Brain microvascular endothelial cell (primary cell): ENCODE measurements at regions of chr1 and their contacts with region 1.

Region 1: DNA sequence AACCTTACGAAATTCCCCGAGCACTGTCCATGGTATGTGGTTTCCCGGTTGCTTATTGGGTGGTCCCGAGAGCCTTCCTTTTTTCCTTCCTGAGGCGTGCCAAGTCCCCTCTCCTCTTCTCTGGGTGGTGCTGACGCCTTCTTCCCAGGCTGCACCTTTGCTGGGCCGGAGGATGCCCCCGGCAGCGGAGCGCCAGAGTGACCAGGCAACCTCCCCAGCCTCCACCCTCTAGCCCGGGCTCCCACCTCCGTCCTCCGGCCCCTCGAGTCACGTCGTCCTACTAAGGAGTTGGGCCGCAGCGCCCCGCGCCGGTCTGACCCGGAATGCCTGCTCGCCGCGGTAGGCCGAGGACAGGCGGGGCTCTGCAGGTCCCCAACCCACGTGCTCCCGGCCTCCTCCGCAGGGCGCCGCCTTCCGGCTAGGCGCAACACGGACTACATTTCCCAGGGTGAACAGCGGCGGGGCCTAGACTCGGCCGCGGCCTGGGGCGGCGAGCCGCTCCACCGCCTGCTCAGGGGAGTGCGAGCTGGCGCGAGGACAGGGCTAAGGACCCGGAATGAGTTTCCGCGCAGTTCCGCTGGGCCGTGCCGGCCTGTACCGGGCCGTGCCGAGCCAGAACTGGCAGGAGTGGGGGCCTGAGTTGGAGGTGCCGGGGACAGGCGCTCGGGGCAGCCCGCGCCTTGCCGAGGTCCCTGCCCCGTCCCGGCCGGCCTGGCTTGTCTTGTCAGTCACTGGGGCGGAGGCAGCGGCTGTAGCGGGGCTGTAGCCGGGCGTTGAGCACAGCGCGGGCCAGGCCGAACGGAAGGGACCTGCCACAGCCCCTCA is at the start of gene IPO13:
- DNase-seq: peak; percentile 87
- H3K4me3 ChIP-seq: peak within 1 kb of the TSS; percentile 90
- H3K27ac ChIP-seq: peak within 1 kb of the TSS; percentile 100
- H3K27me3 ChIP-seq: no peaks in the 10 kb centered on the region
- CTCF ChIP-seq: peak; percentile 60

Region 2: DNA sequence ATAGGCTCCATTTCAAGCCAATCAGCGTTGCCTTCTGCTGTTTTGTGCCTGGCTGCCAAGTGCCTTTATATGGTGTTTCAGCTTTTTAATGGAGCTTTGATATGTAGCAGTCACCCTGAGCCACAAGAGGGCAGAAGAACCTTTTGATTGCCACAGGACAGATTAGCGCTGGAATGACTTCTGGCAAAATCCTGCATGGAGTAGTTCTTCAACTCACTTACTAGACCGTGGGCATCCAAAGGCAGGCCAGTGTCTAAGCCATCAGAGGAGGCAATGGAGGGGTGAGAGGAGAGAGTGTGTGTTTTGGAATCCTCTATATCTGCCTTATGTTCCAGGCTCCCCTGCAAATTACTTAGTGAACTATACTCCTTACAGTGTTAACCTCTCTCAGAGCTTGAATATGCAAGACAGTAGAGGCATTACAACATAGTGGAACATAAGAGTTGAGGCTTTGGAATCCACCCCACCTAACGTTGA is 182.9 kb before region 1 on chr1:
- in situ Hi-C with region 1: loop called (anchors 25 kb)
- DNase-seq: peak; percentile 90
- H3K4me3 ChIP-seq: no peak overlapping the region
- H3K27ac ChIP-seq: no peak overlapping the region
- H3K27me3 ChIP-seq: no peaks in the 10 kb centered on the region
- CTCF ChIP-seq: peak; percentile 85

Region 3: DNA sequence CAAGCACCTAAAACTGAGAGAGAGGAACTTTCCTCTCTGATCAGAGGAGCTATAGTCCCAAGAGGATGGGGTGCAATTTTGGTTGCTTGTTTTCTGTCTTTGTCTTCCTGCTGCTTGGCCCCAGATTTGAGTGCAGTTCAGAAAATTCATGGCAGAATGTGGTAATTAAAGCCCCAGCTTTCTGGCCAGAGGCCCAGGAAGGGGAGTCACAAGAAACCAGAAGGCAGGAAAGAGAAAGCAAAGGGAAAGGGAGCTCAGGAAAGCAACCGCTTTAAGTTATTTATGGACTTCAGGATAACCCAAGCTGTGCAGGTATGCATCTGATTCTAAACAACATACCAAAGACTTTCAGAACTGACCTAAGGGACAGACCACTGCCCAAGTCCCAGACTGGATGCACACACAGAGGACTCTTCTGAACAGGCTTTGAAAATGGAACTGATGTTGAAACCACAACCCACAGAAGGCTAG is 150.3 kb before region 1 on chr1:
- in situ Hi-C with region 1: no loop called
- DNase-seq: peak; percentile 50
- H3K4me3 ChIP-seq: no peak overlapping the region
- H3K27ac ChIP-seq: no peak overlapping the region
- H3K27me3 ChIP-seq: no peaks in the 10 kb centered on the region
- CTCF ChIP-seq: no peak

Region 4: DNA sequence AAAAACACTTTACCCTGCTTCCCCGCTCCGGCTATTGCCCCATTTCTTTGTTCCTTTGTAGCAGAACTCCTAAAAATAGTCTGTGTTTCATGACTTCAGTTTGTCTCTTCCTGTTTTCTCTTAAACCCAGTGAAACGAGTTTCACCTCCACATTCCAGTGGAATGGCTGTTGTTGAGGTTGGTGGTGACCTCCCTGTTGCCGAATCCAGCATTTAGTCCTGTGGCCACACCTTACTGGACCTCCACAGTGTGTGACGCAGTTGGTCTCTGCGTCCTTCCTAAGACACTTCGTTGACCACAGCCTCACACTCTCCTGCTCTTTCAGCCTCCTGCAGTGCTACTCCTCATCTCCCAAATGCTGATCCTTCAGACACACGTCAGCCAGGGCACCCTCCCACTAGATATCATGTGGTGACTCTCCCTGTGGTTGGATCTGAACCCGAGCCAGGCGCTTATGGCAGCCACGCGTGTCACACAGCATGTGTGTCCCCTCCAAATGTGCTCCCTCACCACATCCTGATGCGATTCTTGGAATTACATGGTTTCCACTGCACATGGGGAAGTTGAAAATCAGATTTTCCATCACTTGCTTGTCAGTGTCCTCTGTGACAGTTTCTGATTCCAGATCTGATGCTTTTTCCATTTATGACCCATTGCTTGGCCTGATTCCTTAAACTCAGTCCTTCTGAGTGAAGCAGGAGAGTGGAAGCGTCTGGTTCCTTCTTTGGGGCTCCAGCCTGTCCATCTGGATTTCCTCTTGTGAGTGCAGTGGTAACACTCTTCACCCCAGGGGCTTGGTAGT is 112.0 kb before region 1 on chr1:
- in situ Hi-C with region 1: no loop called
- DNase-seq: peak; percentile 72
- H3K4me3 ChIP-seq: no peak overlapping the region
- H3K27ac ChIP-seq: peak overlapping the region; percentile 68
- H3K27me3 ChIP-seq: no peaks in the 10 kb centered on the region
- CTCF ChIP-seq: no peak

Region 5: GRCh38 chr1:44101356-44101755 is 154.9 kb after region 1 on chr1:
- in situ Hi-C with region 1: no loop called
- DNase-seq: no peak
- H3K4me3 ChIP-seq: no peak overlapping the region
- H3K27ac ChIP-seq: no peak overlapping the region
- H3K27me3 ChIP-seq: no peaks in the 10 kb centered on the region
- CTCF ChIP-seq: no peak

Region 6: GRCh38 chr1:44170281-44170823 is 223.9 kb after region 1 on chr1:
- in situ Hi-C with region 1: no loop called
- DNase-seq: no peak
- H3K4me3 ChIP-seq: no peak overlapping the region
- H3K27ac ChIP-seq: no peak overlapping the region
- H3K27me3 ChIP-seq: no peaks in the 10 kb centered on the region
- CTCF ChIP-seq: peak; percentile 28